OCI-LY7 (cell line): ENCODE measurements at regions of chr21 and their contacts with region 1.

Region 1: GRCh38 chr21:14533504-14534428 is 12.3 kb downstream of the SAMSN1 start:
- DNase-seq: no peak
- H3K4me3 ChIP-seq: no peak overlapping the region
- H3K27ac ChIP-seq: no peak overlapping the region
- H3K4me1 ChIP-seq: no peaks in the 10 kb centered on the region
- CTCF ChIP-seq: no peak

Region 2: GRCh38 chr21:14523234-14523633 is 10.5 kb before region 1 on chr21:
- CTCF ChIA-PET with region 1: no interaction called
- POLR2A ChIA-PET with region 1: interaction called, 35 read pairs
- intact Hi-C with region 1: no loop called
- DNase-seq: no peak
- H3K4me3 ChIP-seq: no peak overlapping the region
- H3K27ac ChIP-seq: no peak overlapping the region
- H3K4me1 ChIP-seq: no peaks in the 10 kb centered on the region
- CTCF ChIP-seq: no peak

Region 3: GRCh38 chr21:14545906-14546480 is 12.2 kb after region 1 on chr21 and contains the start of gene SAMSN1:
- CTCF ChIA-PET with region 1: no interaction called
- POLR2A ChIA-PET with region 1: interaction called, 11 read pairs
- intact Hi-C with region 1: no loop called
- DNase-seq: no peak
- H3K4me3 ChIP-seq: no peak within 1 kb of the TSS
- H3K27ac ChIP-seq: no peak within 1 kb of the TSS
- H3K4me1 ChIP-seq: no peaks in the 10 kb centered on the region
- CTCF ChIP-seq: no peak
- total RNA-seq, gene SAMSN1: not detected in 2 replicates

Region 4: GRCh38 chr21:14572204-14572780 is 38.5 kb after region 1 on chr21:
- CTCF ChIA-PET with region 1: no interaction called
- POLR2A ChIA-PET with region 1: no interaction called
- intact Hi-C with region 1: no loop called
- DNase-seq: no peak
- H3K4me3 ChIP-seq: no peak overlapping the region
- H3K27ac ChIP-seq: no peak overlapping the region
- H3K4me1 ChIP-seq: no peaks in the 10 kb centered on the region
- CTCF ChIP-seq: no peak